Activated CD8-positive, alpha-beta T cell treated with anti-CD3 and anti-CD28 coated beads for 36 hours (primary cell): ENCODE measurements at regions of chr16 and their contacts with region 1.

Region 1: GRCh38 chr16:57462209-57462977 is at the start of gene POLR2C:
- DNase-seq: peak; percentile 95
- ATAC-seq: peak; percentile 98
- H3K4me3 Mint-ChIP-seq: peak within 1 kb of the TSS; percentile 99
- H3K27ac Mint-ChIP-seq: peak within 1 kb of the TSS; percentile 100
- H3K4me1 Mint-ChIP-seq: peaks cover 25% of the 10 kb centered on the region
- H3K27me3 Mint-ChIP-seq: no peaks in the 10 kb centered on the region
- CTCF ChIP-seq: peak; percentile 99
- total RNA-seq, gene POLR2C: 62.4 to 63.0 TPM

Region 2: DNA sequence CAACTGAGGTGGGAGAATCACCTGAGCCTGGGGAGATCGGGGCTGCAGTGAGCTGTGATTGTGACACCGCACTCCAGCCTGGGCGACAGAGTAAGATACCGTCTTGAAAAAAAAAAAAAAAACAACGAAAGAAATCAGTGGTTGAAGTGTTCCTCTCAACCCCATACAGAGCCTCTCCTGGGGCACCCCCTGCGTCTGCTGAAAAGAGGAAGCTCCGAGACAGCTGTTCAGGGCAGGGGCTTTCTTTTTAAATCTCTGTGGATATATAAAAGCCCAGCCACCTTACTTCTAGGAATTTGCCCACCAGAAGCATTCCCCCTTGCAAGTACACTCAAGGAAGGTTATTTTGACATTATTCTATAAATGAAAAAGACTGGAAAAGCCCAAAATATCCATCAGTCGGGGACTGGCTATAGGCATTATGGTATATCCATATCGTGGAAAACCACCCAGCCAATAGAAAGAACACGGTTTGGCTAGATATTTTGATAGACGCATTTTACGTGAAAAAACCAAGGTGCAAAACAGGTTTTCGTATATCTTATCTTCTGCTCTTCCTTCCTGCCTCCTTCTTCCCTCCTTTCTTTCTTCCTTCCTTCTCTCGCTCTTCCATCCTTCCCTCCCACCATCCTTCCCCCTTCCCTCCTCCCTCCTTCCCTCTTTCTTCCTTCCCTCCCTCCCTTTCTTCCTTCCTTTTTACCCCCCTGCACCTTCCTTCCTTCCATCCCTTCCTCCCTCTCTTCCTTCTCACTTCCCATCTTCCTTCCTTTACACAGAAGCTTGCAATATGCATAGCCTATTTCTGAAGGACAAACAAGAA is 113.0 kb before region 1 on chr16:
- CTCF ChIA-PET with region 1: no interaction called
- POLR2A ChIA-PET with region 1: no interaction called
- intact Hi-C with region 1: no loop called
- DNase-seq: peak; percentile 75
- ATAC-seq: peak; percentile 99
- H3K4me3 Mint-ChIP-seq: peak overlapping the region; percentile 17
- H3K27ac Mint-ChIP-seq: no peak overlapping the region
- H3K4me1 Mint-ChIP-seq: peaks cover 21% of the 10 kb centered on the region
- H3K27me3 Mint-ChIP-seq: peaks cover 36% of the 10 kb centered on the region
- CTCF ChIP-seq: no peak

Region 3: GRCh38 chr16:57447186-57447962 is 15.0 kb before region 1 on chr16 and contains the starts of genes CIAPIN1 and COQ9:
- CTCF ChIA-PET with region 1: interaction called, 40 read pairs
- POLR2A ChIA-PET with region 1: interaction called, 20 read pairs
- intact Hi-C with region 1: no loop called
- DNase-seq: peak; percentile 95
- ATAC-seq: peak; percentile 99
- H3K4me3 Mint-ChIP-seq: peak within 1 kb of the TSS; percentile 94
- H3K27ac Mint-ChIP-seq: peak within 1 kb of the TSS; percentile 91
- H3K4me1 Mint-ChIP-seq: peaks cover 47% of the 10 kb centered on the region
- H3K27me3 Mint-ChIP-seq: no peaks in the 10 kb centered on the region
- CTCF ChIP-seq: no peak
- total RNA-seq, gene CIAPIN1: 53.3 to 53.4 TPM
- total RNA-seq, gene COQ9: 39.3 to 39.6 TPM

Region 4: GRCh38 chr16:57475711-57476339 is 13.4 kb after region 1 on chr16:
- CTCF ChIA-PET with region 1: interaction called, 17 read pairs
- POLR2A ChIA-PET with region 1: interaction called, 47 read pairs
- intact Hi-C with region 1: no loop called
- DNase-seq: peak; percentile 93
- ATAC-seq: peak; percentile 98
- H3K4me3 Mint-ChIP-seq: peak overlapping the region; percentile 22
- H3K27ac Mint-ChIP-seq: peak overlapping the region; percentile 48
- H3K4me1 Mint-ChIP-seq: peaks cover 15% of the 10 kb centered on the region
- H3K27me3 Mint-ChIP-seq: no peaks in the 10 kb centered on the region
- CTCF ChIP-seq: peak; percentile 97

Region 5: DNA sequence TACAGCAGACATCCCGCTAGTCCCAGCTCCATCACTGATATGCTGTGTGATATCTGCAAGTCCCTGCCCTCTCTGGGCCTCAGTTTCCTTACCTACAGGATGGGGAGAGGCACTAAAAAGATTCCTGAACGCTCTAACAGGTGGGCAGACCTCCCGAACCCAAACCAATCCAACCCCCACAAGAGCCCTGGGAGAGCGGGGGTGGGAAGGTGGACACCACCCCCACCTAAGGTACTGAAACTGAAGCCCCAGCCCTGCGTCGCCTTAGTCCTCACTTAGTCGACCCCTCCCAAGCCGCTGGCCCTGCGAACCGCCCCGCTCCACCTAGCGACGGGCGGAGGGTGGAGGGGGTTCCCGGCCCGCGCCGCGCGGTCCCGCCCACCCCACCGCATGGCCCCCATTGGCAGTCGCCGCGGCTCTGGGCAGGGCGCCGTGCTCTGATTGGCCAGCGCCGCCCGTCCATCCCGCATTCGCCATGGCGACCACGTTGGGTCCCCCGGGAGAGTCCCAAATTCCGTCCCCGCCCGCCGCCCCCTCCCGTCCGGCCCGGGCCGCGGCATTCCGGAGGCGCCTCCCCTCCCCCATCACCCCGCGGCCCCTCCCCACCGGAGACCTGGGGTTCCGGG is 73.4 kb after region 1 on chr16:
- CTCF ChIA-PET with region 1: interaction called, 10 read pairs
- POLR2A ChIA-PET with region 1: interaction called, 6 read pairs
- intact Hi-C with region 1: no loop called
- DNase-seq: peak; percentile 95
- ATAC-seq: peak; percentile 78
- H3K4me3 Mint-ChIP-seq: peak overlapping the region; percentile 81
- H3K27ac Mint-ChIP-seq: peak overlapping the region; percentile 92
- H3K4me1 Mint-ChIP-seq: peaks cover 73% of the 10 kb centered on the region
- H3K27me3 Mint-ChIP-seq: no peaks in the 10 kb centered on the region
- CTCF ChIP-seq: no peak

Region 6: DNA sequence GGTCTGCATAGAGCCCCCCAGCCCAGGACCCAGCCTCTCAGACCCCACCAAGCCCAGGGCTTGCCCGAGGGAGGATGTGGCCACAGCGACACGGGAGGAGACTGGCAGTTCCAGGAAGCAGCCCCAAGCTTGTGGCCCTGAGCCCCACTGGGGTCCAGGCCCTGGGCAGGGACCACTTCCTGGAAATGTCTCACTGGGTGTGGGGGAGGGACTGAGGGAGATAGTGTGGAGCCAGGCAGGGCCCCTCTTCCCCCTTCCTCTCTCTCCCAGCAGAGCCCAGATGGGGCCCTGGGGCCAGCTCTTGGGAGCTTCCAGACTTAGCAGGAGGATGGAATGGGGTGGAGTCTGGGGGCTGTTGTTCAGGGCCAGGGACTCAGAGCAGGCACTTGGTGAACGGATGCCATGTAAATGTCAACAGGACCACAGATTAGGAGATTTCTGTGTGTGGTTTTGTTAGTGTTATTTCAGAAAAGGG is 115.4 kb after region 1 on chr16:
- CTCF ChIA-PET with region 1: no interaction called
- POLR2A ChIA-PET with region 1: no interaction called
- intact Hi-C with region 1: no loop called
- DNase-seq: peak; percentile 78
- ATAC-seq: peak; percentile 67
- H3K4me3 Mint-ChIP-seq: peak overlapping the region; percentile 17
- H3K27ac Mint-ChIP-seq: peak overlapping the region; percentile 88
- H3K4me1 Mint-ChIP-seq: peaks cover 50% of the 10 kb centered on the region
- H3K27me3 Mint-ChIP-seq: no peaks in the 10 kb centered on the region
- CTCF ChIP-seq: no peak